ENCODE measurements at regions of chr15 and their contacts with region 1.

Region 1: GRCh38 chr15:78565097-78565951 is at the start of gene CHRNA5:
- DNase-seq: peak; percentile 98
- H3K4me3 Mint-ChIP-seq: peak within 1 kb of the TSS; percentile 87
- H3K27ac Mint-ChIP-seq: peak within 1 kb of the TSS; percentile 92
- H3K4me1 Mint-ChIP-seq: peaks cover 7% of the 10 kb centered on the region
- H3K27me3 Mint-ChIP-seq: no peaks in the 10 kb centered on the region
- CTCF ChIP-seq: no peak
- total RNA-seq, gene CHRNA5: 34.9 and 47.0 TPM in 2 replicates

Region 2: GRCh38 chr15:78429477-78429876 is 135.8 kb before region 1 on chr15:
- CTCF ChIA-PET with region 1: no interaction called
- intact Hi-C with region 1: no loop called
- DNase-seq: no peak
- H3K4me3 Mint-ChIP-seq: no peak overlapping the region
- H3K27ac Mint-ChIP-seq: no peak overlapping the region
- H3K4me1 Mint-ChIP-seq: no peaks in the 10 kb centered on the region
- H3K27me3 Mint-ChIP-seq: peaks cover 69% of the 10 kb centered on the region
- CTCF ChIP-seq: no peak

Region 3: DNA sequence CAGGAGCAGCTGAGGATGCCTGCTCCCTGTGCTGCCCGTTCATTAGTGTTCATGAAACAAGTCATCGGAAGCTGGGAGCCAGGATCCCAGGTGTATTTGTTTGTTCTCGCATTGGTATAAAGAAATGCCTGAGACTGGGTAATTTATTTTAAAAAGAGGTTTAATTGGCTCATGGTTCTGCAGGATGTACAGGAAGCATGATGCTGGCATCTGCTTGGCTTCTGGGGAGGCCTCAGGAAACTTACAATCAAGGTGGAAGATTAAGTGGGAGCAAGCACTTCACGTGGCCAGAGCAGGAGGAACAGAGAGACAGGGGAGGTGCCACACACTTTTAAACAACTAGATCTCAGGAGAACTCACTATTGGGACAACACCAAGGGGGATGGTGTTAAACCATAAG is 63.5 kb before region 1 on chr15:
- CTCF ChIA-PET with region 1: no interaction called
- intact Hi-C with region 1: no loop called
- DNase-seq: no peak
- H3K4me3 Mint-ChIP-seq: no peak overlapping the region
- H3K27ac Mint-ChIP-seq: no peak overlapping the region
- H3K4me1 Mint-ChIP-seq: no peaks in the 10 kb centered on the region
- H3K27me3 Mint-ChIP-seq: no peaks in the 10 kb centered on the region
- CTCF ChIP-seq: no peak

Region 4: GRCh38 chr15:78540141-78540928 is 25.0 kb before region 1 on chr15 and contains the start of gene PSMA4:
- CTCF ChIA-PET with region 1: interaction called, 16 read pairs
- intact Hi-C with region 1: no loop called
- DNase-seq: peak; percentile 95
- H3K4me3 Mint-ChIP-seq: peak within 1 kb of the TSS; percentile 79
- H3K27ac Mint-ChIP-seq: peak within 1 kb of the TSS; percentile 90
- H3K4me1 Mint-ChIP-seq: peaks cover 15% of the 10 kb centered on the region
- H3K27me3 Mint-ChIP-seq: no peaks in the 10 kb centered on the region
- CTCF ChIP-seq: no peak
- total RNA-seq, gene PSMA4: 358 and 376 TPM in 2 replicates